Activated CD8-positive, alpha-beta memory T cell treated with anti-CD3 and anti-CD28 coated beads, Interleukin-2, amount 10 ng/mL, durations not matched to agents 7 days and 5 days (primary cell): ENCODE measurements at regions of chr18 and their contacts with region 1.

Region 1: GRCh38 chr18:11937874-11938478 is 29.9 kb upstream of the MPPE1 start:
- DNase-seq: peak; percentile 82
- ATAC-seq: peak; percentile 83
- H3K4me3 Mint-ChIP-seq: no peak overlapping the region
- H3K27ac Mint-ChIP-seq: no peak overlapping the region
- H3K4me1 Mint-ChIP-seq: peaks cover 2% of the 10 kb centered on the region
- H3K27me3 Mint-ChIP-seq: no peaks in the 10 kb centered on the region

Region 2: GRCh38 chr18:11733031-11733430 is 204.9 kb before region 1 on chr18:
- CTCF ChIA-PET with region 1: interaction called, 14 read pairs
- DNase-seq: peak; percentile 78
- ATAC-seq: peak; percentile 87
- H3K4me3 Mint-ChIP-seq: no peak overlapping the region
- H3K27ac Mint-ChIP-seq: no peak overlapping the region
- H3K4me1 Mint-ChIP-seq: no peaks in the 10 kb centered on the region
- H3K27me3 Mint-ChIP-seq: peaks cover 33% of the 10 kb centered on the region

Region 3: DNA sequence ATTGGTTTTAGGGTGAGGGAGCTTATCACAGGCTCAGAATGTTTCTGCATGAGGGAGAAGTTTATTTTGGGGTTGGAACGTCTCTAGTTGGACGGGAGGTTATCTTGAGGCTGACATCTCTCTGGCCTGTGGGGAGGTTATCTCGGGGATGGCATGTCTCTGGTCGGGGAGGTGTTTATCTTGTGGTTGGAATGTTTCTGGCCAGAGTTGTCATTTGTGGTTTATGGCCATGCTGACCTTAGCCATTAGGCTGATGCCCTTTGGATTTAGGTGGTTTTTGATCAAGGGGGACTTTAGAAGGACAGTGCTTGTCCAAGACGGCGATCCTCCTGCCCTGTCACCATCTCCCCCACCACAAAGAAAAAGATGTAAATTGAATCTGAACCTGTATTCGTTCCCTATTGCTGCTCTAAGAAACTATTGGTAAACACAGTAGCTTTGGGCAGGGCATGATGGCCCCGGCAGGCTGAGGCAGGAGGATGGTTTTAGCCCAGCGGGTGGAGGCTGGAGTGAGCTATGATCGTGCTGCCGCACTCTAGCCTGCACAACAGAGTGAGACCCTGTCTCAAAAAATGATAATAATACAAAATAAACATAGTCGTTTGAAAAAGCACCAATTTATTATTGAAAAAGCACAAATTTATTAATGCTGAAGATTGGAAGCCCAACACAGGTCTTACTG is 12.0 kb before region 1 on chr18:
- CTCF ChIA-PET with region 1: interaction called, 19 read pairs
- DNase-seq: no peak
- ATAC-seq: no peak
- H3K4me3 Mint-ChIP-seq: no peak overlapping the region
- H3K27ac Mint-ChIP-seq: no peak overlapping the region
- H3K4me1 Mint-ChIP-seq: peaks cover 15% of the 10 kb centered on the region
- H3K27me3 Mint-ChIP-seq: no peaks in the 10 kb centered on the region

Region 4: DNA sequence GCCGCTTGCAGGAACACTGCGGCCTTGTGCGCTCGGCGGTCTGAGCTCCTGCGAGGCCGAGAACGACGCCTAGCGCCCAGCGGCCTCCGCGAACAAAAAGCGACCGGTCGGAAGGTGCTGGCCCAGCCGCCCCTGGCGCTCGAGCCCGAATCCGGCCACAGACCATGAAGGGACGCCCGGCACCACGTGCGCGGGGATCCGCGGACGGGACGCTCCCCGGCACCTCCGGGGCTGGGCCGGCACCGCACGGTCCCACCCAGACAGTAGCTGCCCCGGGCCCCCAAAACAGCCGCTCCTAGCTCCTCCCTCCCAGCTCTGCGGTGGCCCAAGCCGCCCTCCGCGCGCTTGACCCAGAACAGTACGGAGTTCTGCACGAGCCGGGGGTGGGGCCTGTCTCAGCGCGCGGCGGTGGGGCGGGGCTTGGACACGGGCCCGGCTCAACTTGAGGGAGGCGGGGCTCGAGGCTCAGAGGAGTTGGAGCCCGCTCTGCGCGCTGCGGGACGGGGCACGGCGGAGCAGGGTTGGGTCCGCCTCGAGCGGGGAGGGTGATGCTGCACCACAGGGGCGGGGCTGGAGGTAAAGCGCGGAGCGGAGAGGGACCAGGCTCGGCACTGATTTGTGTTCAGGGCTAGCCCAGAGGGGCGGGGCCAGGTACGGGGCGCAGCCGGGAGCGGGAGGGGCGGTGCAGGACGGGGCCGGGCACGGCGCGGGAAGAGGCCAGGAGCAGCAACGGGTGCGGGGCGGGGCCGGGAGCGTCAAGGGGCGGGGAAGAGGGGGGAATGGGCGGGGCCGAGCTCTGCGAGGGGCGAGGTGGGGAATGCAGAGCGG is 42.8 kb after region 1 on chr18:
- CTCF ChIA-PET with region 1: interaction called, 13 read pairs
- DNase-seq: peak; percentile 98
- ATAC-seq: peak; percentile 93
- H3K4me3 Mint-ChIP-seq: peak overlapping the region; percentile 87
- H3K27ac Mint-ChIP-seq: peak overlapping the region; percentile 76
- H3K4me1 Mint-ChIP-seq: peaks cover 22% of the 10 kb centered on the region
- H3K27me3 Mint-ChIP-seq: peaks cover 3% of the 10 kb centered on the region

Region 5: DNA sequence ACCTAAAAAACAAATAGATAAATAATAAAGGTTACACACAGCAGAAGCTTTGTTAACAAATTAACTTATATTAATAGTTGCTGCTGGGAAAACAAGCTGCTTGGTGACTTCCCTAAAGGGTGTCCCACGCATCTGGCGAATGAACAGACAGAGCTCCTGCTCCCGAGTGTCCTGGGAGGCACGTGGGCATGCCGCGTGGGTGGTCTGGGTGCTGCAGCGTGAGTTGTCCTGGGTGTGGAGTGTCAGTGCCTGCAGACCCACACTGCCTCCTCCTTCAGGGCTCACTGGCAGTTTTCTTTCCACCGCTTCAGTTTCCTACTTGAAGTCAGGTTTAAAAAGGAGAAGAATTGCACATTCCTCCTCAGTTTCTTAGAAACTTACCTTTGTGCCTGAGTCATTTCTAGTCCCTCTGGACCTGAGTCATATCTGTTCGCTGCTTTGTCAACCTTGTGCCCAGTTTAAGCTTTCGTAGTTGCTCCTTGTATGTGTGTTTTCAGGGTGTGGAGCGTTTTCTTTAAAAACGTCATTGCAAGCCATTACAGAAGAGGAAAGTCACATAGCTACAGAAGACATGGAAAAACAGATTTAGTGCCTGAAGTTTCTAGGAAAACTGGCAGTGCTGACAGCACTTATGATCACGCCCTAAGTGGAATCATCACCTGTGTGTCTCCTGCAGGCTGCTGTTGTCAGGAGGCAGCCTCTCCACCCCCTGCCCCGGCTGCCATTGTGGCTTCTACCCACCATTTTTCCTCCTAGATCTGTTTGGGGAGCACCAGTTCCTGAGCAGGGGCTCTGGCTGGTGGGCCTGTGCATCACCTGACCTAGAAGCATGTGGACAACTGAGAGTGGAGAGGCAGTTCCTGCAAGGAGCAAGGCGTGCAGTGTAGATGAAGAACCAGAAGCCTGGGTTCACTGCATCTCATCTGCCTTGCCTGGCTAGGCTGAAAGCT is 67.8 kb after region 1 on chr18:
- CTCF ChIA-PET with region 1: interaction called, 15 read pairs
- DNase-seq: no peak
- ATAC-seq: no peak
- H3K4me3 Mint-ChIP-seq: no peak overlapping the region
- H3K27ac Mint-ChIP-seq: no peak overlapping the region
- H3K4me1 Mint-ChIP-seq: peaks cover 8% of the 10 kb centered on the region
- H3K27me3 Mint-ChIP-seq: no peaks in the 10 kb centered on the region

Region 6: GRCh38 chr18:12038639-12039417 is 100.9 kb after region 1 on chr18:
- CTCF ChIA-PET with region 1: interaction called, 120 read pairs
- DNase-seq: peak; percentile 80
- ATAC-seq: peak; percentile 89
- H3K4me3 Mint-ChIP-seq: peak overlapping the region; percentile 45
- H3K27ac Mint-ChIP-seq: no peak overlapping the region
- H3K4me1 Mint-ChIP-seq: peaks cover 14% of the 10 kb centered on the region
- H3K27me3 Mint-ChIP-seq: peaks cover 21% of the 10 kb centered on the region

Region 7: GRCh38 chr18:12060182-12060870 is 122.3 kb after region 1 on chr18:
- CTCF ChIA-PET with region 1: no interaction called
- DNase-seq: no peak
- ATAC-seq: no peak
- H3K4me3 Mint-ChIP-seq: no peak overlapping the region
- H3K27ac Mint-ChIP-seq: no peak overlapping the region
- H3K4me1 Mint-ChIP-seq: no peaks in the 10 kb centered on the region
- H3K27me3 Mint-ChIP-seq: peaks cover 4% of the 10 kb centered on the region

Region 8: DNA sequence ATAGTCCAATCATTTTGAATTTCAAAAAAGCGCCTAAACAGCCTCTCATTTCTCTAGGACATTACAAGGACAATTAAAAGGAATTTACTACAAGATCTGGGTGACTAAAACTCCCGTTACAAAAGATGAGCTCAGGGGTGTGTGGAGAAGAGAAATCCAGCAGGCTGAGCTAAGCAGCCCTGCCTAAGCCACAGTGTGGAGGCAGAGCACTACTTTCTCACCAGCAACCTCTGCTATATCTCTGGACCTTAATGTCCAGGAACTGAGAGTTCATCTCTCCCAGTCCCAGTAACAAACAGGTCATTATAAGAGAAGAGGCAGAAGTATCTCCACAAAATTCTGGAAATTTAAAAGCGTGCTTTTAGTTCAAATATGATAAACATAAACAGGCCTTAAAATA is 136.8 kb after region 1 on chr18:
- CTCF ChIA-PET with region 1: no interaction called
- DNase-seq: no peak
- ATAC-seq: no peak
- H3K4me3 Mint-ChIP-seq: no peak overlapping the region
- H3K27ac Mint-ChIP-seq: no peak overlapping the region
- H3K4me1 Mint-ChIP-seq: no peaks in the 10 kb centered on the region
- H3K27me3 Mint-ChIP-seq: peaks cover 50% of the 10 kb centered on the region